Esophagus muscularis mucosa (tissue), 4 donors: ENCODE measurements at regions of chr2 and their contacts with region 1.

Region 1: GRCh38 chr2:223051693-223052289 is at the start of gene KCNE4:
- DNase-seq: no peak
- H3K4me3 ChIP-seq: peak within 1 kb of the TSS; percentile 52 to 64 (median 63)
- H3K27ac ChIP-seq: peak within 1 kb of the TSS; percentile 86 to 92 (median 90)
- H3K4me1 ChIP-seq: peaks cover 16 to 78% (median 78%) of the 10 kb centered on the region in 4 donors
- H3K27me3 ChIP-seq: no peaks in the 10 kb centered on the region
- CTCF ChIP-seq: no peak
- EP300 ChIP-seq: no peak
- POLR2A ChIP-seq: peak; percentile 66
- total RNA-seq, gene KCNE4: 11.6 to 38.1 (median 17.7) TPM

Region 2: GRCh38 chr2:222892321-222892720 is 159.5 kb before region 1 on chr2:
- intact Hi-C with region 1: no loop called
- DNase-seq: no peak
- H3K4me3 ChIP-seq: no peak overlapping the region
- H3K27ac ChIP-seq: no peak overlapping the region
- H3K4me1 ChIP-seq: peaks cover 24 to 49% (median 34%) of the 10 kb centered on the region in 4 donors
- H3K27me3 ChIP-seq: no peaks in the 10 kb centered on the region
- CTCF ChIP-seq: no peak
- EP300 ChIP-seq: no peak
- POLR2A ChIP-seq: no peak

Region 3: GRCh38 chr2:222993920-222994650 is 57.7 kb before region 1 on chr2:
- intact Hi-C with region 1: loop called (anchors 5 kb)
- DNase-seq: peak; percentile 93
- H3K4me3 ChIP-seq: peak overlapping the region; percentile 15 to 45 (median 30)
- H3K27ac ChIP-seq: peak overlapping the region; percentile 85 to 92 (median 87)
- H3K4me1 ChIP-seq: peaks cover 24 to 34% (median 25%) of the 10 kb centered on the region in 4 donors
- H3K27me3 ChIP-seq: no peaks in the 10 kb centered on the region
- CTCF ChIP-seq: no peak
- EP300 ChIP-seq: no peak
- POLR2A ChIP-seq: no peak

Region 4: GRCh38 chr2:223101340-223102039 is 49.7 kb after region 1 on chr2:
- intact Hi-C with region 1: loop called (anchors 5 kb)
- DNase-seq: peak; percentile 60
- H3K4me3 ChIP-seq: no peak overlapping the region
- H3K27ac ChIP-seq: peak overlapping the region; percentile 53 to 75 (median 73)
- H3K4me1 ChIP-seq: peaks cover 3 to 48% (median 44%) of the 10 kb centered on the region in 4 donors
- H3K27me3 ChIP-seq: no peaks in the 10 kb centered on the region
- CTCF ChIP-seq: peak; percentile 45 to 63 (median 50)
- EP300 ChIP-seq: no peak
- POLR2A ChIP-seq: no peak